Ovary (tissue), 10 donors: ENCODE measurements at regions of chr1 and their contacts with region 1.

Region 1: GRCh38 chr1:44786138-44786840 is 1.7 kb downstream of the BEST4 start:
- DNase-seq: peak; percentile 79 to 85 (median 84)
- H3K4me3 ChIP-seq: peak overlapping the region; percentile 38
- H3K27ac ChIP-seq: peak overlapping the region; percentile 66 to 80
- H3K4me1 ChIP-seq: peaks cover 5% of the 10 kb centered on the region
- H3K27me3 ChIP-seq: no peaks in the 10 kb centered on the region
- CTCF ChIP-seq: peak; percentile 97 to 99 (median 99)
- EP300 ChIP-seq: no peak
- POLR2A ChIP-seq: no peak

Region 2: DNA sequence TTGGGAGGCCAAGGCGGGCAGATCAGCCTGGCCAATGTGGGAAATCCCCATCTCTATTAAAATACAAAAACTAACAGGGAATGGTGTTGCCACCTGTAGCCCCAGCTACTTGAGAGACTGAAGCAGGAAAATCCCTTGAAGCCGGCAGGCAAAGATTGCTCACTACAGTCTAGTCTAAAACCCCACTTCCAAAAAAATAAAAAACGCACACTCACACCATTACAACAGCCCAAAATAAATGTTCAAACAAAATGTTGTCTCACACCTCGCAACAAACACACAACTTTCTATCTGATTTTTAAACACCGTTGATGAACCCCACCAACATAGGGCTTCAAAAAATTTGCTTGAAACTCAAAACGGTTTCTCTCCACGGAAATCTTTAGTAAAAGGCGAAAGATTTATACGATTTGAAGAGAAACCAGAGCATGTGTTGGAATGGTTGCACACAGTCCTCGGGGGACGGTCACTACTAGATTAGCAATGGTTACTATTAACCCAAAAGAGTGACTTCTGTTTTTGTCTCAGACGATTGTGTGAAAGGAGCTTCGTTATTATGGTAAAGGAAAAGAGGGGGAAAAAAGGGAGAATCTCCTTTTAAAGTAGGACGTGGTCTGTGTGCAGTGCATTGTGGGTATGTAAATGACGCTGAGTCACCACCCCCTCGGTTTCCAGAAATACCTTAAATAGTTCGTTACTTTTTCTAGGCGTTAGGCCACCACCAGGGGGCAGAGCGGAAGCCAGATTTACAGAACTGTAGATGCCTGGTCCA is 55.4 kb before region 1 on chr1 and contains the start of gene RNU5D-1:
- intact Hi-C with region 1: loop called in 1 of 4 experiments (anchors 10 kb)
- DNase-seq: peak; percentile 92 to 97 (median 95)
- H3K4me3 ChIP-seq: peak within 1 kb of the TSS; percentile 6
- H3K27ac ChIP-seq: peak within 1 kb of the TSS; percentile 79 to 86
- H3K4me1 ChIP-seq: no peaks in the 10 kb centered on the region
- H3K27me3 ChIP-seq: no peaks in the 10 kb centered on the region
- CTCF ChIP-seq: peak; percentile 59 to 89 (median 83)
- EP300 ChIP-seq: no peak
- POLR2A ChIP-seq: peak; percentile 63
- total RNA-seq, gene RNU5D-1: not detected

Region 3: DNA sequence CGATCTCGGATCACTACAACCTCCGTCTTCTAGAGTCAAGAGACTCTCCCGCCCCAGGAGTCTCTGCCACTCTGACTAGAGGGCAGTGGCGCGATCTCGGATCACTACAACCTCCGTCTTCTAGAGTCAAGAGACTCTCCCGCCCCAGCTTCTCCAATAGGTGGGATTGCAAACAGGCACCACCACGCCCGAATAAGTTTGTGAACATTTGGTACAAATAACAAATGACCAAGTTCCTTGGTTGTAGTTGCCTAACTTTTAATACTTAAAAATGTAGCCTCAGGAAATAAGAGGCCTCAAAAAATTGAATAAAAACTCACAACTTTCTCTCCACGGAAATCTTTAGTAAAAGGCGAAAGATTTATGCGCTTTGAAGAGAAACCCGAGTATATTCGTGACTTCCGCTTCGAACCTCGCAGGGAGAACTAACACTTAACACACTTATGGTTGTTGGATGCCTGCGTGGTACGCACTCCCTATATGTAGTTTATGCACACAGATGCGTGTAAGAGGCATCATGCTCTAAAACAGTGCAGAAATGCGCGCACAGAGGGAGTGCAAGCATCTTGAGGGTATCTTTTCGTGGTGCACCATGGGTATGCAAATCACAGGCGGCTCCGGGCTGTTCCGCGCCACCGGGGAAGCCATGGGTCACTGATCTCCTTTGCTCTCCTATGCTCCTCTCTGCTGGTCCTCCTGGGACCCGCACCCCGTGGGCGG is 33.5 kb after region 1 on chr1:
- intact Hi-C with region 1: loop called in 1 of 4 experiments (anchors 5 kb)
- DNase-seq: peak; percentile 78 to 85 (median 80)
- H3K4me3 ChIP-seq: peak overlapping the region; percentile 51
- H3K27ac ChIP-seq: peak overlapping the region; percentile 62 to 93
- H3K4me1 ChIP-seq: peaks cover 3% of the 10 kb centered on the region
- H3K27me3 ChIP-seq: no peaks in the 10 kb centered on the region
- CTCF ChIP-seq: peak in 1 of 3 donors; percentile 13
- EP300 ChIP-seq: peak; percentile 2
- POLR2A ChIP-seq: peak; percentile 83

Region 4: DNA sequence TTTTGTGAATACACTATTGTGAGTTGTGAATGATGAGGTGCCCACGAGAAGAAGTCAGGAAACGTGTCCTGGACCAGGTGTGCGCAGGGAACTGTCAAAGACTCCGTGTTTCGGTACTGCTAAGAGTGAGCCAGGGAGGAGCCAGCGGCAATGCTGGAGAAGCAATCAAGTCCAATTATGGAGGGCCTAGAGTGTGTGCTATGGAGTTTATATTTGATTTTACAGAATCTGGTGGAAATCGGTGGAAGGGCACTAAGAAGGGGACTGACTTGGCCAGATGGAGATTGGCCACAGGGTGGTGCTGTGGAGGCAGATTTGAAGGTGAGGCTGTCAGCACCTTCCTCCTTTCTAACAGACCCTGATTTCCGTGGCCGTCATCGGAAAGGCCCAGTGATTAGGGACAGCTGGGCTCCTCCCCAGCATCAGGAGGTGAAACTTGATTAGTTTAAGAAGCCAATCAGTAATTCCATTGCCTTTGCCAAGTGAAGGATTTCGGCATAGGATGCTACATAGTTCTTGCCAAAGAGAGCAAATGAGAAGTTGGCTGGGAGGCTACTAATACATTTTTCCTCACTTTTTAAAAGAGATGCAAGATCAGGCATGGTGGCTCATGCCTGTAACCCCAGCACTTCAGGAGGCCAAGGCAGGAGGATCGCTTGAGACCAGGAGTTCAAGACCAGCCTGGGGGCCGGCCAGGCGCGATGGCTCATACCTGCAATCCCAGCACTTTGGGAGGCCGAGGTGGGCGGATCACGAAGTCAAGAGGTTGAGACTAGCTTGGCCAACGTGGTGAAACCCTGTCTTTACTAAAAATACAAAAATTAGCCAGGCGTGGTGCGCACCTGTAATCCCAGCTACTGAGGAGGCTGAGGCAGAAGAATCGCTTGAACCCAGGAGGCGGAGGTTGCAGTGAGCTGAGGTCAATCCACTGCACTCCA is 49.7 kb after region 1 on chr1:
- intact Hi-C with region 1: loop called in 1 of 4 experiments (anchors 10 kb)
- DNase-seq: peak; percentile 88 to 94 (median 92)
- H3K4me3 ChIP-seq: no peak overlapping the region
- H3K27ac ChIP-seq: peak overlapping the region in 1 of 2 donors; percentile 27
- H3K4me1 ChIP-seq: peaks cover 3% of the 10 kb centered on the region
- H3K27me3 ChIP-seq: no peaks in the 10 kb centered on the region
- CTCF ChIP-seq: peak; percentile 64 to 87 (median 67)
- EP300 ChIP-seq: no peak
- POLR2A ChIP-seq: no peak